AG04450 (cell line): ENCODE measurements at regions of chr4 and their contacts with region 1.

Region 1: GRCh38 chr4:138090150-138090917 is 151.8 kb downstream of the SLC7A11 start:
- DNase-seq: peak; percentile 72
- H3K4me3 ChIP-seq: peak overlapping the region; percentile 45
- H3K27ac ChIP-seq: no peak overlapping the region
- H3K27me3 ChIP-seq: no peaks in the 10 kb centered on the region
- CTCF ChIP-seq: peak; percentile 70

Region 2: GRCh38 chr4:137762591-137762990 is 327.7 kb before region 1 on chr4:
- CTCF ChIA-PET with region 1: no interaction called
- POLR2A ChIA-PET with region 1: no interaction called
- DNase-seq: no peak
- H3K4me3 ChIP-seq: no peak overlapping the region
- H3K27ac ChIP-seq: no peak overlapping the region
- H3K27me3 ChIP-seq: no peaks in the 10 kb centered on the region
- CTCF ChIP-seq: no peak

Region 3: DNA sequence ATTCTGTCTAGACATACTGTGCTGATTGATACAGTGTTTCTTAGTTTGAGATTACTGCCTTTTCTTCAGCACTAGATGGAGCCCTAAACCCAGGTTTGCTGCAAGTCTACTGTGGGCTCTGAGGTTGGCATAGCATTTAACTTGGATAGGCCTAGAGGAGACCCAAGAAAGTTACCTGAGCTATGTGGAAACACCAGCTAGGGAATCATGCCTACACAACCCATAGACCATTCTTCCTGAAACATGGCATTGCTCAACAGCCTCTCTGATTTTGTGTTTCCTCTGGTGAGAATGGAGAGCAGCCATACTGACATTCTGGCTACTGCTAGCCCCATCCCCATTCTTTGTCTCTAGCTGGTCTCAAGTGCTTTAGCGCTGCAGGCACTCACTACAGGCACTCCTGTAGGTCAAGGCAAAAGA is 270.4 kb before region 1 on chr4:
- CTCF ChIA-PET with region 1: interaction called, 27 read pairs
- POLR2A ChIA-PET with region 1: no interaction called
- DNase-seq: peak; percentile 18
- H3K4me3 ChIP-seq: no peak overlapping the region
- H3K27ac ChIP-seq: no peak overlapping the region
- H3K27me3 ChIP-seq: no peaks in the 10 kb centered on the region
- CTCF ChIP-seq: peak; percentile 71

Region 4: DNA sequence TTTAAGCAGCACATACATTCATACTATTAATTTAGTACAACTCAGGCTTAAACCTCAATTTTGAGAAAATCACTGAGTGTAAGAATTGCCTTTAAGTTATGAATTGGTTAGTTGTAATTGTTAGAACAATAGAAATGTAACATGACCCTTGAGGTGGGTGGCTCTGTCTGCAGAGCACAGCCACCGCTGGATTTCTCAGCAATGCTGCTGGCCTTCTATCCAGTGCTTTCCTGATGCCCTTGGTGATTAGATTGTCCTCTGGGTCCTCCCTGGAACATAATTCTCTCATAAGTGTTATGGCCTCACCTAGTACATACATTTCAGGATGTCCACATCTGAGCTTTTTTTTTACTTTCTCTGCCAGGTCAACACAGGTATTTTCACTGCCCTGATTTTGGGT is 61.4 kb before region 1 on chr4:
- CTCF ChIA-PET with region 1: interaction called, 99 read pairs
- POLR2A ChIA-PET with region 1: no interaction called
- DNase-seq: no peak
- H3K4me3 ChIP-seq: no peak overlapping the region
- H3K27ac ChIP-seq: no peak overlapping the region
- H3K27me3 ChIP-seq: no peaks in the 10 kb centered on the region
- CTCF ChIP-seq: no peak

Region 5: GRCh38 chr4:138053641-138054301 is 36.6 kb before region 1 on chr4:
- CTCF ChIA-PET with region 1: interaction called, 18 read pairs
- POLR2A ChIA-PET with region 1: no interaction called
- DNase-seq: peak; percentile 68
- H3K4me3 ChIP-seq: peak overlapping the region; percentile 38
- H3K27ac ChIP-seq: peak overlapping the region; percentile 68
- H3K27me3 ChIP-seq: no peaks in the 10 kb centered on the region
- CTCF ChIP-seq: no peak

Region 6: DNA sequence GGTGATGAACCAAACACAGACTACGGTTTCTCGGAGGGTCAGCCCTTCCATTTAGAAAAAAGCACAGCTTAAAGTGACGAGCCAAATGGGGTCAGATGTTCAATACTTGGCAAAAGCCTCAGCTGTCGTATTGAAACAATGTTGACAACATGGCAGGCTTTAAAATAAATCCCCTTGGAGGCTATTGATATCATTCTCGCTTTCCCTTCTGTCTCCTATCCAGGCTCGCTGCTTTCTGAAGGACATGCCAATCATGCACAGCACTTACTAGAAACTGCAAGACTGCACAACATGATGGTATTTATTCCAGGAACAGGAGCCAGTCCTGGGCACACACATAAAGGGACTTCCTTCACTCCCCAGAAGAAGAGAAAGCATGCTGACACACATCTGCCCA is 13.9 kb after region 1 on chr4:
- CTCF ChIA-PET with region 1: interaction called, 37 read pairs
- POLR2A ChIA-PET with region 1: no interaction called
- DNase-seq: no peak
- H3K4me3 ChIP-seq: no peak overlapping the region
- H3K27ac ChIP-seq: no peak overlapping the region
- H3K27me3 ChIP-seq: no peaks in the 10 kb centered on the region
- CTCF ChIP-seq: no peak

Region 7: GRCh38 chr4:138182838-138183426 is 92.6 kb after region 1 on chr4:
- CTCF ChIA-PET with region 1: interaction called, 15 read pairs
- POLR2A ChIA-PET with region 1: no interaction called
- DNase-seq: peak; percentile 26
- H3K4me3 ChIP-seq: no peak overlapping the region
- H3K27ac ChIP-seq: no peak overlapping the region
- H3K27me3 ChIP-seq: no peaks in the 10 kb centered on the region
- CTCF ChIP-seq: peak; percentile 68

Region 8: DNA sequence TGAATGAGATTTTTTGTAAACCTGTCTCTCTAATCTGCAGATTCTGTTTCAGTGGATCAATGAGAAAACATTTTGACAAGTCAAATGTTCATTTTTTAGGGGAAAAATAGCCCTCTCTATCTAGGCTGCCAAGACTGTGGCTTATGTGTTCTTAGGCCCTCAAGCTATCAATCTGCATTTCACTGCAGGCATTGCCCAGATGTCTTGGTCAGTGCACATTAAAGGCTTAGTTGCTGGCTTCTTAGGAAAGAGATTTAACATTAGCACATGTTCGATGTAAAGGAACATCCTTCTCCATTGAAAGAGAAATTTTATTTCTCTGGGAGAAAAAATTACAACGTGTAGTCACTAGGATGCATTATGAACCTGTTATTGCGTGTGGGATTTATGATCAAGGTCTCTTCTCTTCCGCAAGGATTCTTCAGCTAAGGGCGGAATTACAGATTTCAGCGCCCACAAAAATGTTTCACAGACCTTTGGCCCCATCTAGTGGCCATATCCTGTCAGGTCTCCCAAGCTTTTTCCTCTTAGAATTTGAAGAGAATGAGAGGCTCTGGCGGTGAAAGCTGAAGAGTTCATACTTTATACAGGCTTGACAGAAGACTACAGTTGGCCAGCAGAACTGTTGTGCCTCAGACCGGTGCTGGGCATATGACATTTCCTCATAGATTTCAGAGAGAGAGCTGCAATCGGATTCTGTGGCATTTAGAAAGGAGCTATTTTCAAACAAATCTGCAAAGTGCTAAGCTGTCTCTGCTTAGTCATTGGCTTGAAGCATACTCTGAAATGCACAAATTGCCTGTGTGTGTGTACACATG is 780.6 kb after region 1 on chr4:
- CTCF ChIA-PET with region 1: interaction called, 22 read pairs
- POLR2A ChIA-PET with region 1: no interaction called
- DNase-seq: peak; percentile 55
- H3K4me3 ChIP-seq: no peak overlapping the region
- H3K27ac ChIP-seq: no peak overlapping the region
- H3K27me3 ChIP-seq: no peaks in the 10 kb centered on the region
- CTCF ChIP-seq: peak; percentile 83